Common myeloid progenitor, CD34-positive (primary cell): ENCODE measurements at regions of chr17 and their contacts with region 1.

Region 1: DNA sequence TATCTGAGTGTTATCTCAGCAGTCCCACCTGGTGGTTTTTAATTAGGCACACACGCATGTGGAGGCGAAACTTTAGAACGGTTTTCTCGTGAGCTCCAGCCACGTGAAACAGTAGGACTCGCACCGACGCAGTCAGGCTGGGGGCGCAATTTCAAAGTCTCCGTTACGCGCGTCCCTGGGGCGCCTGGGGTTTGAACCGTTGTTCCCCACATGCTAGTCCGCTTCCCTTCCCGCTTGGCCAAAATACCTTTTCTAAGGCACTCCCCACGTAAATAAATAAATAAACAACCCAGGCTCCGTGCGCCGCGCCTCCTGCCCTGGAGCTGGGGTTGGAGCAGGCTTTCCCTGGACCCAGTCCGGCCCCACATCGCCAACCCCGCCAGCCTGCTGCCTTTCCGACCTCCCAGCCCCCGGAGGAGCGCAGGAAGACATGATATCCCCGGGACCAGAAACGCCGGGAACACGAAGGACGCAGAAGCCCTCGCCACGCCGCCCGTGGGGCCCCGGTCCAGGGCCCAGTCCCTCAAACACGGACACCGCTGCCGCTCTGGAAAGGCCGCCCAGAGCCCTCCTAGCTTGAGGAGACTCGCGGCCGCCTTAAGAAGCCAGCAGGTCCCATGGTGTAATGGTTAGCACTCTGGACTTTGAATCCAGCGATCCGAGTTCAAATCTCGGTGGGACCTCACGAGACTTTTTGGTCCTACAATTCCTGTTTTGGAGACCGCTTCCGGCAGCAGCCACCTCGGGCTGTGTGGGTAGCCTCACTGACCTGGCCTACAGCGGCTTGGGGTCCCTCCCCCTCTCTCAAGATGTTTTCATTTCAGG is 18.2 kb downstream of the GNGT2 start:
- DNase-seq: peak; percentile 87 to 94 (median 92)
- H3K4me3 ChIP-seq: peak overlapping the region; percentile 65 to 86 (median 75)
- H3K27ac ChIP-seq: peak overlapping the region; percentile 95 to 97
- H3K4me1 ChIP-seq: peaks cover 0 to 30% (median 25%) of the 10 kb centered on the region in 4 experiments
- H3K27me3 ChIP-seq: no peaks in the 10 kb centered on the region

Region 2: DNA sequence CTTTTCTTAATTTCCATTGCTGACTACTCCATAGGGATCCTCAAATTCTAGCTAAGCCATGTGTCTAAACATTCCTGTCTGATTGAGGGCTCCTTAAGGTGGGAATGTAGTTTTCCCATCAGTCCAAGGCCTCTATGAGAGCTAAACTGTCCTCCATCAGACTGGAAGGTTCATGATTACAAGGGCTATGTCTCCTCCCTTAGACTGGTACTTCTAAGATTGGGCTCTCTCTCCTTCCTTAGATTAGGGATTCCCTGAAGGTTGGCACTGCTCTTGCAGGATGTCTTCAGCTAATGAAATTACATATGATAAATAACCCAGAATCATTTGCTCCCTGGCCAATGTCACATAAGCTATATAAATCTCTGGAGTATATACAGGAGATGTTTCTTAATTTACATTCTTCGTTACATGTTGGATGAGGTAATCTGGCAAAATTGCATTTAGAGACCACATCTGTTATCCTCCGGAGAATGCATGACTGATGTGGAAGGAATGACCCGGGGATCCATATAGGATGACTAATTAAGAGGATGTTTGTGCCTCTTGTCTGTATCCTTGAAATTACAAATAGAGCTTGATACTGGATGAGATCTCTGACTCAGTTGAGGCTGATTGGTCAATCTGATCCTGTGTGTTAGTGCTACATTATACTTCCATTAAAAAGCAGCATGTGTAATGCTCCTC is 45.4 kb before region 1 on chr17:
- CTCF ChIA-PET with region 1: no interaction called
- POLR2A ChIA-PET with region 1: no interaction called
- DNase-seq: no peak
- H3K4me3 ChIP-seq: no peak overlapping the region
- H3K27ac ChIP-seq: no peak overlapping the region
- H3K4me1 ChIP-seq: no peaks in the 10 kb centered on the region
- H3K27me3 ChIP-seq: peaks cover 0 to 22% (median 7%) of the 10 kb centered on the region in 5 experiments

Region 3: GRCh38 chr17:49180303-49180702 is 11.8 kb before region 1 on chr17:
- CTCF ChIA-PET with region 1: interaction called, 26 read pairs
- POLR2A ChIA-PET with region 1: no interaction called
- DNase-seq: peak; percentile 55 to 62 (median 60)
- H3K4me3 ChIP-seq: no peak overlapping the region
- H3K27ac ChIP-seq: no peak overlapping the region
- H3K4me1 ChIP-seq: peaks cover 0 to 10% (median 0%) of the 10 kb centered on the region in 4 experiments
- H3K27me3 ChIP-seq: no peaks in the 10 kb centered on the region

Region 4: DNA sequence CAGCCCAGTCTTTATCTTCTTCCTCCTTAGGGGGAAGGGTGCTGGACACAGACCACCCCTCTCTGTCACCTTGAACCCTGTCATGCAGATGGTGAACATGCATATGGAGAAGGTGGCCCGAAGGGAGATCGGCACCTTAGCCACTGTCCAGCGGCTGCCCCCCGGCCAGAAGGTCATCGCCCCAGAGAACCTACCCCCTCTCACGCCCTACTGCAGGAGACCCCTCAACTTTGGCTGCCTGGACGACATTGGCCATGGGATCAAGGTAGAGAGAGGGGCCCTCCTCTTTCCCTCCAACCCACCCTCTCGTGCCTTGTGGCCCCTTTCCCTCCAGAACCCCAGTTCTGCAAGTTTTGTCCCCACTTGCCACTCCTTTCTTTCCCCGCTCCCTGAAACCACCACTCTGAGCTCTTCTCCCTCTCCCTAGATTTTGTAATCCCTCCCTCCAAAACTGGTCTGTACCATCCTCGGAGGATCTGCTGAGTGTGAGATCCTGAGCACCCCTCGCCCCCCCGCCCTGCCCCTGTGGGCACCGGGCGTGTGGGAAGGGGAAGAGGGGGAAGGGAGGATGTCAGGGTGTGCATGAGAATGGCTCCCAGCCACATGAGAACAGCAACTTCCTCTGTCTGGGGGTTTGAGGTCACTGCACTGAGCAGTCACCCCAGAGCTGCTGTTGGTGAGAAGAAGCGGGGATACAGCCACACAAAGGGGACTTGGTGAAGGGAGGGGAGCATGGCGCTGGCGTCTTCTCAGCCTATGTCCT is 25.7 kb after region 1 on chr17:
- CTCF ChIA-PET with region 1: interaction called, 11 read pairs
- POLR2A ChIA-PET with region 1: interaction called, 14 read pairs
- DNase-seq: peak; percentile 85 to 92 (median 91)
- H3K4me3 ChIP-seq: peak overlapping the region in 4 of 7 experiments; percentile 4 to 55 (median 23)
- H3K27ac ChIP-seq: no peak overlapping the region
- H3K4me1 ChIP-seq: peaks cover 5 to 75% (median 36%) of the 10 kb centered on the region in 4 experiments
- H3K27me3 ChIP-seq: peaks cover 0 to 5% (median under 1%) of the 10 kb centered on the region in 5 experiments

Region 5: DNA sequence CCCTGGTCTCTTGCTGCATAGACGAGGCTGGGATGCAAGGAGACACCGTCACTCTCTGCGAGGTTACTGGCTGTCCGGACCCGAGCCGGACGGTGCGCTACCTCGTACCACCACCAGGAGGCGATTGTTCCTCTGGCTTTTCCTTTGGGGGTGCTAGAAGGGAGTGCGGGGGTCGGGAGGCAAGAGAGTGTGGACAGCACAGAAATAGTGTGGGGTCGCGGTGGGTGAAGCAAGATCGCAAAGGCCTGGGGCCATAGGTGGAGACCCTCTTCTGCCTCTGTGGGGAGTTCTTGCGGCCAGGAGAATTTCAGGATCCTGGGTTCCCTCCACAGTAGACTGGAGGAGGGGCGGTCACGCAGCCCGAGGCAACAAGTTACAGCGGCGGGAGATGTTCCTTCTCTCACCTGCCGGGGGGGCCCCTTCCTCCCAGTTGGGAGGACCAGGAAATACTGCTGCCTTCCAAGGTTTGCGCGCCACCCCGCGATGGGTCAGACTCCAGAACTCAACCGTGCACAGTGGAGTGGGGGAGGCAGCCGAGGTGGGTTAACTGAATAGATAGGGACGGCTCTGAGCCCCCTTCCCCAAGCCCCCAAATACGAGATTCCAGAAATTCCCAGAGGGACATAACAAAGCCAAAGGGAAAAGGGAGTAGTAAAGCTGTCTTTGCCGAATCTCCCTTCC is 31.5 kb after region 1 on chr17:
- CTCF ChIA-PET with region 1: interaction called, 68 read pairs
- POLR2A ChIA-PET with region 1: interaction called, 14 read pairs
- DNase-seq: peak in 2 of 3 donors; percentile 50 to 59
- H3K4me3 ChIP-seq: peak overlapping the region in 5 of 7 experiments; percentile 19 to 63 (median 51)
- H3K27ac ChIP-seq: no peak overlapping the region
- H3K4me1 ChIP-seq: peaks cover 0 to 39% (median 31%) of the 10 kb centered on the region in 4 experiments
- H3K27me3 ChIP-seq: peaks cover 0 to 55% (median 12%) of the 10 kb centered on the region in 5 experiments

Region 6: GRCh38 chr17:49230636-49231562 is 38.8 kb after region 1 on chr17 and contains the start of gene PHOSPHO1:
- CTCF ChIA-PET with region 1: interaction called, 68 read pairs
- POLR2A ChIA-PET with region 1: no interaction called
- DNase-seq: peak; percentile 84 to 91 (median 90)
- H3K4me3 ChIP-seq: peak within 1 kb of the TSS in 6 of 7 experiments; percentile 63 to 76 (median 68)
- H3K27ac ChIP-seq: no peak within 1 kb of the TSS
- H3K4me1 ChIP-seq: peaks cover 0 to 19% (median 15%) of the 10 kb centered on the region in 4 experiments
- H3K27me3 ChIP-seq: peaks cover 0 to 60% (median 9%) of the 10 kb centered on the region in 5 experiments